ENCODE measurements at regions of chr11 and their contacts with region 1.

Region 1: GRCh38 chr11:118689851-118690552 is 10.6 kb upstream of the TREH start:
- DNase-seq: peak; percentile 76 to 86 (median 83)
- H3K4me3 ChIP-seq: peak overlapping the region; percentile 44 to 75
- H3K4me3 Mint-ChIP-seq: peak overlapping the region; percentile 65 to 83 (median 76)
- H3K27ac ChIP-seq: peak overlapping the region; percentile 59
- H3K27ac Mint-ChIP-seq: peak overlapping the region in 6 of 7 donors; percentile 50 to 89 (median 78)
- H3K4me1 ChIP-seq: peaks cover 51% of the 10 kb centered on the region
- H3K4me1 Mint-ChIP-seq: peaks cover 37 to 67% (median 50%) of the 10 kb centered on the region in 4 donors
- H3K27me3 ChIP-seq: no peaks in the 10 kb centered on the region
- H3K27me3 Mint-ChIP-seq: peaks cover 0 to 3% of the 10 kb centered on the region in 2 donors

Region 2: DNA sequence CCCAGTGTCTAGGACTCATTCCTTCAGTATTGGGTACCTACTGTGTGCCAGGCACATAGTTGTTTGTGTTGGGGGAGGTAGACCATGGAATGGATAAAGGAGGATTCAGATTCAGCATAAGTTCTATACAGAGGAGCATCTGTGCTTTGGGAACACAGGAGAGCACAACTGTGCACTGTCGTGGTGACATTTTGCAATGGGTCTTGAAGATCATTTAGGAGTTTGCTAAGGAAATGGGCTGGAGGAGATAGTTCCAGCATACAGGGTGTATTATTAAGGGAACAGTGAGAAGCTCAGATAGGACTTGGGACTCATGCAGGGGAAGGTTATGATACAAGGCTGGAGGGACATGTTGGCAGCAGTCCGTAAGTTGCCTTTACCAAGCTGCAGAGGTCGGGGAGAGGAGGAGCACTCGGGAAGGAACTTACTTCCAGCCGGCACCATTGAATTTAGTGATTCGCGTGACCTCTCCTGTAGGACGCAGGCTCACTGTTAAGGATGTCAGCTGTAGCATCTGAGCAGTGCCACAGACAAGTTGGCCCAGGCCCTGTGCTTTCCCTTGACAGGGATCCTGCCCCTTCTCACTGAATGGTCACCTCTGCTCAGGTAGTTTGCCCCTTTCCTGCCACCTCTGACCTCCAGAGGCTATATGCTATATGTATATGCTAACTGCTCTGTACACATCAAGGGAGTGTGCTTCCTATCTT is 36.2 kb before region 1 on chr11:
- CTCF ChIA-PET with region 1: no interaction called
- POLR2A ChIA-PET with region 1: no interaction called
- intact Hi-C with region 1: no loop called
- DNase-seq: no peak
- H3K4me3 ChIP-seq: no peak overlapping the region
- H3K4me3 Mint-ChIP-seq: no peak overlapping the region
- H3K27ac ChIP-seq: no peak overlapping the region
- H3K27ac Mint-ChIP-seq: peak overlapping the region in 1 of 7 donors; percentile 63
- H3K4me1 ChIP-seq: peaks cover 8% of the 10 kb centered on the region
- H3K4me1 Mint-ChIP-seq: peaks cover 6 to 11% (median 10%) of the 10 kb centered on the region in 4 donors
- H3K27me3 ChIP-seq: no peaks in the 10 kb centered on the region
- H3K27me3 Mint-ChIP-seq: no peaks in the 10 kb centered on the region

Region 3: GRCh38 chr11:118746988-118747585 is 57.1 kb after region 1 on chr11:
- CTCF ChIA-PET with region 1: interaction called, 21 read pairs
- POLR2A ChIA-PET with region 1: interaction called, 7 read pairs
- intact Hi-C with region 1: loop called (anchors 2 kb)
- DNase-seq: no peak
- H3K4me3 ChIP-seq: no peak overlapping the region
- H3K4me3 Mint-ChIP-seq: no peak overlapping the region
- H3K27ac ChIP-seq: no peak overlapping the region
- H3K27ac Mint-ChIP-seq: peak overlapping the region in 4 of 7 donors; percentile 10 to 72 (median 42)
- H3K4me1 ChIP-seq: peaks cover 6% of the 10 kb centered on the region
- H3K4me1 Mint-ChIP-seq: peaks cover 7 to 10% (median 7%) of the 10 kb centered on the region in 4 donors
- H3K27me3 ChIP-seq: no peaks in the 10 kb centered on the region
- H3K27me3 Mint-ChIP-seq: no peaks in the 10 kb centered on the region

Region 4: DNA sequence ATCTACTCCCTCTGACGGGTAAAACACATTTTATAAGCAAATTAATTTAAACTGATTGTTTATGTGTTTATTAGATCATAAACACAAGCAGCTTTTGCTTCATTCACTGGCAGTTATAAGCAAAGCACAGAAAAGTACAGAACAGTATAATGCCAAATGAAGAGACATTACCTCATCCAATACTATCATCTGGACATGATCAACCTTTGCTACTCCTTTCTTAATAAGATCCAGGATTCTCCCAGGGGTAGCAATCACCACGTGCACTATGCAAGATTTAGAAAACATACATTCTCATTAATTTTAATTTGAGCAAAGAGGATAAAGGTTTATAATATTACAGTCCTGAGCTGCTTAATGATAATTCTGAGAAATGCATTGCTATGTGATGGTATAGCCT is 73.0 kb after region 1 on chr11:
- CTCF ChIA-PET with region 1: interaction called, 18 read pairs
- POLR2A ChIA-PET with region 1: interaction called, 4 read pairs
- intact Hi-C with region 1: no loop called
- DNase-seq: no peak
- H3K4me3 ChIP-seq: no peak overlapping the region
- H3K4me3 Mint-ChIP-seq: no peak overlapping the region
- H3K27ac ChIP-seq: no peak overlapping the region
- H3K27ac Mint-ChIP-seq: peak overlapping the region in 1 of 7 donors; percentile 60
- H3K4me1 ChIP-seq: peaks cover 8% of the 10 kb centered on the region
- H3K4me1 Mint-ChIP-seq: peaks cover 9 to 30% (median 19%) of the 10 kb centered on the region in 4 donors
- H3K27me3 ChIP-seq: no peaks in the 10 kb centered on the region
- H3K27me3 Mint-ChIP-seq: no peaks in the 10 kb centered on the region

Region 5: GRCh38 chr11:118870396-118871345 is 180.7 kb after region 1 on chr11:
- CTCF ChIA-PET with region 1: interaction called, 9 read pairs
- POLR2A ChIA-PET with region 1: interaction called, 11 read pairs
- intact Hi-C with region 1: no loop called
- DNase-seq: peak in 2 of 5 donors; percentile 50 to 60
- H3K4me3 ChIP-seq: peak overlapping the region in 1 of 2 donors; percentile 33
- H3K4me3 Mint-ChIP-seq: peak overlapping the region; percentile 80 to 89 (median 83)
- H3K27ac ChIP-seq: peak overlapping the region; percentile 82
- H3K27ac Mint-ChIP-seq: peak overlapping the region; percentile 96 to 100 (median 99)
- H3K4me1 ChIP-seq: peaks cover 66% of the 10 kb centered on the region
- H3K4me1 Mint-ChIP-seq: peaks cover 41 to 62% (median 49%) of the 10 kb centered on the region in 4 donors
- H3K27me3 ChIP-seq: no peaks in the 10 kb centered on the region
- H3K27me3 Mint-ChIP-seq: no peaks in the 10 kb centered on the region

Region 6: DNA sequence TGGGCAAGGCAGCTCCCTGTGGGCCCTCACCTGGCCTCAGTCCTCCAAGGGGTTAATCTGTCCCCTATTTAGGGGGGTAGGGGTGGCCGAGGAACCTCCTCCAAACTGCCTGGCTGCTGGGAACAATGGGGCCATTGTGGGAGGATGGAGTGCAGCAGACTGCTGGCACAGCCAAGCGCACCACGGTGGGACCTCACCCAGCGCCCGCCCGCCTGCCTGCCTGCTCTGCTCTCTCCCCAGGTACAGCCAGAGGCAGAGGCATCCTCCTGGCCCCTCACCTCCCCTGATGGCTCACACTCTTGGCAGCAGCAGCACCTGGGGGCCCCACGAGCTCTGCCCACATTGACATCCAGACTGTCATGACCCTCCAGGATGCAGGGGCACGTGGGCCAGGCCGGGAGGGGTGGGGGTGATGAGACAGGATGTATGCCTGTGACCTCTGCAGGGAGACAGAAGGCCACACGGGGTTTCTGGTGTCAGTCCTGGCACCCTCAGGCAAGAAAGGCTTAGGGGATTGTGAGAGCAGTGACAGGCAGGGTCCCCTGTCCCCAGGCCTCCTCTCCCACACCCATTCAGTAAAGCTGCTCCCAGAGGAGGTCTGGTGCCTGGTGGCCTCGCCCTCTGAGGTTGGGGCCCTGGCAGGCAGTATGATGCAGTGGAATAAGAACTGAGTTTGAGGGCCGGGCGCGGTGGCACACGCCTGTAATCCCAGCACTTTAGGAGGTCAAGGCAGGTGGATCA is 224.3 kb after region 1 on chr11:
- CTCF ChIA-PET with region 1: interaction called, 3 read pairs
- POLR2A ChIA-PET with region 1: interaction called, 15 read pairs
- intact Hi-C with region 1: no loop called
- DNase-seq: peak; percentile 80 to 95 (median 83)
- H3K4me3 ChIP-seq: peak overlapping the region; percentile 59 to 73
- H3K4me3 Mint-ChIP-seq: peak overlapping the region; percentile 78 to 93 (median 88)
- H3K27ac ChIP-seq: peak overlapping the region; percentile 99
- H3K27ac Mint-ChIP-seq: peak overlapping the region; percentile 99 to 100 (median 99)
- H3K4me1 ChIP-seq: peaks cover 95% of the 10 kb centered on the region
- H3K4me1 Mint-ChIP-seq: peaks cover 61 to 86% (median 71%) of the 10 kb centered on the region in 4 donors
- H3K27me3 ChIP-seq: no peaks in the 10 kb centered on the region
- H3K27me3 Mint-ChIP-seq: no peaks in the 10 kb centered on the region